CD8-positive, alpha-beta T cell (primary cell): ENCODE measurements at regions of chr1 and their contacts with region 1.

Region 1: DNA sequence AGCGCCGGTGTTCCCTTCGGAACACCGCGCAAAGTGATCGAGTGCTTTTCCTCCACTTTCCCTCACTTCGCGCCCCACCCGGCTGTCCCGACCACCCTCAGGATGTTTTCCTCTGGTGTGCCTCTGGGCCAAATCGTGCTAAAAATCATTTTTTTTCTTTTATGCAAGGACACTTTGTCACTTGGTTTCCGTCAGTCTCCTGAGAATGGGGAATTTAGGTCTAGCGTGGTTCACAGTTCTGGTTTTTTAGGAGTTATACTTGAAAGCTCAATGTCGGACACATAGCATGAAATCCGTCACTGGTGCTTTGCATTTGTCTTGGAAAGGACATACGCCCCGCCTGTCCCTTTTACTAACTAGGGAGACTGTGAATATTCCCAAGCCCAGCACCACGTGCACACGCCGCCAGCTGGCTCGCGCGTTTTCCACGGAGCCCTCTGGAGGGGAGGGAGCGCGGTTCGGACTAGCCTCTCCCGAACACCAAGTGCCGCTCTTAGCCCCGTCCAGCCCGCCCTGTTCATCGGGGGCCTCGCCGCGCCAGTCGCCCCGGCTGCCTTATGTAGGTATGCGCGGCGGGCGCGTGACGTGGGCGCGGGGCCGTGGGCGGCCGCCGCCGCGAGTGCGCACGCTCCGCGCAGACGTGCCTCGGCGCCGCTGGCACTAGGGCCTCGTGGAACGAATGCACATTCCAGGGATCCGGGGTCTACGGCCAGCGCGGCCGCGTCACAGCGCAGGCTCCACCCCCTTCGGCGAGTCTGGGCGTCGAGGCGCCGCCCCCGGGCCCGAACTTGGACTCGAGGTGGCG is 572 bp upstream of the IRF2BP2 start:
- DNase-seq: peak; percentile 78 to 98 (median 89)
- ATAC-seq: peak; percentile 42
- H3K4me3 ChIP-seq: peak overlapping the region; percentile 78 to 86
- H3K4me3 Mint-ChIP-seq: peak overlapping the region; percentile 92
- H3K27ac ChIP-seq: peak overlapping the region; percentile 97 to 99
- H3K27ac Mint-ChIP-seq: peak overlapping the region; percentile 98
- H3K4me1 ChIP-seq: peaks cover 46% of the 10 kb centered on the region
- H3K4me1 Mint-ChIP-seq: peaks cover 49% of the 10 kb centered on the region
- H3K27me3 ChIP-seq: no peaks in the 10 kb centered on the region
- H3K27me3 Mint-ChIP-seq: no peaks in the 10 kb centered on the region
- CTCF ChIP-seq: no peak

Region 2: GRCh38 chr1:234579967-234580366 is 30.6 kb before region 1 on chr1:
- CTCF ChIA-PET with region 1: no interaction called
- POLR2A ChIA-PET with region 1: no interaction called
- intact Hi-C with region 1: no loop called
- DNase-seq: peak in 2 of 9 experiments; percentile 18 to 48
- ATAC-seq: peak; percentile 57
- H3K4me3 ChIP-seq: no peak overlapping the region
- H3K4me3 Mint-ChIP-seq: no peak overlapping the region
- H3K27ac ChIP-seq: no peak overlapping the region
- H3K27ac Mint-ChIP-seq: no peak overlapping the region
- H3K4me1 ChIP-seq: no peaks in the 10 kb centered on the region
- H3K4me1 Mint-ChIP-seq: no peaks in the 10 kb centered on the region
- H3K27me3 ChIP-seq: no peaks in the 10 kb centered on the region
- H3K27me3 Mint-ChIP-seq: peaks cover 2% of the 10 kb centered on the region
- CTCF ChIP-seq: peak; percentile 18

Region 3: DNA sequence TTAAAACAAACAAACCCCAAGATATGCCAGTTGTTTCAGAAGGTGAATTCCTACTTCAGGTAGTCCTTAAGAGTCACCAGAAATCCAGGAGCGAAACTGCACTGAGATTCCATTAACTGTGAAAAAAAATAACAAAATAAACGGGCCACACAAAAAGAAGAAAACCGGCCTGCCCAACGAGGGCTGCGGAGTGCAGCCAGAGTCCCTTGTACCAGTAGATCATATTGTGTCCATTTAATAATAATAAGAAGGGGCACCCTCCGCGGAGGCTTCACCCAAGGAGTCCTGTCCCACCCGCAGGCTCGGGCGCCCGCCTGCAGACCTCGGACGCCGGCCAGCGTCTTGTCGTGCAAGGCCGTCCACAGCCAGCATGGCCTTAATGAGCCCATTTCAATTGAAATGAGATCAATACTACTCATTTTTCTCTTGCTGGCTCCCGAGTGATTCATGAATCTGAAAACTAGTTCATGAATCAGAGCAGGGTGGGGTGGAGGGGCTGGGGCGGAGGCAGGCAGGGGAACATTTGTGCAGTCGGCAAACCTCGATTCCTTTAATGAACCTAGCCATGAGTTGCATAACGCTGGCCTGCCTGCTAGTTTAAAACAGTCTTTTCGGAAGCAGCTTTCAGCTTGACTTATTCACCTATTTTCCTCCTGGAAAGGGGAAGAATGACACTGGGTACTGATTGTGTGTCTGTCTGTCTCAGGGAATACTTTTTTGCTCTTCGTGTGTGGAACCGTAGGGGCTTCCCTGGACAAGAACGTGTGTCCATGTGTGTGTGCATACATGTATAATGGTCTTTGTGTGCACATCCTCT is 112.6 kb after region 1 on chr1:
- CTCF ChIA-PET with region 1: interaction called, 21 read pairs
- POLR2A ChIA-PET with region 1: interaction called, 115 read pairs
- intact Hi-C with region 1: loop called (anchors 1 kb)
- DNase-seq: peak in 8 of 9 experiments; percentile 37 to 76 (median 58)
- ATAC-seq: peak; percentile 26
- H3K4me3 ChIP-seq: peak overlapping the region; percentile 28 to 34
- H3K4me3 Mint-ChIP-seq: peak overlapping the region; percentile 71
- H3K27ac ChIP-seq: peak overlapping the region; percentile 83 to 96
- H3K27ac Mint-ChIP-seq: peak overlapping the region; percentile 92
- H3K4me1 ChIP-seq: peaks cover 38% of the 10 kb centered on the region
- H3K4me1 Mint-ChIP-seq: peaks cover 61% of the 10 kb centered on the region
- H3K27me3 ChIP-seq: no peaks in the 10 kb centered on the region
- H3K27me3 Mint-ChIP-seq: no peaks in the 10 kb centered on the region
- CTCF ChIP-seq: no peak

Region 4: DNA sequence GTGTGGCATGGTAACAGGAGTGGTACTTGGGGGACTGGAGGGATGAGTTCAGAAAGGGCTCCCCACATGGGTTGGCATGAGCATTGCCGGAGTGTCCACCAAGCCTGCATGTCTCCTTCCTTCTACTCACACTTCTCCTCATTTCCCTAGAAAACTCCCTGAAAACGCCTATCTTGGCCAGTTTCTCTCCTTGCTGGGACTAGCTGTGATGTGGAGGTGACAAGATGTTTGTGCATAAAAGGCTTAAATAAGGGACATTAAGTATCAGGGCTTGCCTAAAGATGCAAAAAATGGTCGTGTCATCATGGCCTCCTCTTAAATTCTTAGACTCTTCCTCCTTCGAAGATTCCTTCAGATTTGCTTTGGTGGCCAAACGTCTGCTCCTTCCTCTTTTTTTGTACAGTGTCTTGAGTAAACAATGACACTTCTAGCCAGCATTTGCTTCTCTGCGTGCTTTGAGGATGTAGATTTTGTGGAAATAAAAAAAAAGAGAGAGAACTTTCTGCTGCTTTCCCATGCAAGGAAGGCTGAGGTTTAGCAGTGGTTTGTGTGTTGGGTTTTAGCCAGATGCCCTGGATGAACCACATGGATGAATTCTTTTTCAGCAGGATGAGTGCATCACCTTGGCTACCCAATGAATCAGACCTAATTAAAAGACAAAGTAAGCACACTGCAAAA is 238.6 kb after region 1 on chr1:
- CTCF ChIA-PET with region 1: interaction called, 4 read pairs
- POLR2A ChIA-PET with region 1: interaction called, 3 read pairs
- intact Hi-C with region 1: loop called (anchors 5 to 10 kb)
- DNase-seq: no peak
- ATAC-seq: no peak
- H3K4me3 ChIP-seq: no peak overlapping the region
- H3K4me3 Mint-ChIP-seq: no peak overlapping the region
- H3K27ac ChIP-seq: no peak overlapping the region
- H3K27ac Mint-ChIP-seq: no peak overlapping the region
- H3K4me1 ChIP-seq: peaks cover 22% of the 10 kb centered on the region
- H3K4me1 Mint-ChIP-seq: peaks cover 38% of the 10 kb centered on the region
- H3K27me3 ChIP-seq: no peaks in the 10 kb centered on the region
- H3K27me3 Mint-ChIP-seq: no peaks in the 10 kb centered on the region
- CTCF ChIP-seq: no peak

Region 5: GRCh38 chr1:234978397-234979295 is 368.1 kb after region 1 on chr1:
- CTCF ChIA-PET with region 1: no interaction called
- POLR2A ChIA-PET with region 1: interaction called, 17 read pairs
- intact Hi-C with region 1: no loop called
- DNase-seq: peak in 6 of 9 experiments; percentile 29 to 76 (median 62)
- ATAC-seq: peak; percentile 77
- H3K4me3 ChIP-seq: peak overlapping the region in 1 of 2 experiments; percentile 11
- H3K4me3 Mint-ChIP-seq: peak overlapping the region; percentile 66
- H3K27ac ChIP-seq: peak overlapping the region in 1 of 2 experiments; percentile 3
- H3K27ac Mint-ChIP-seq: peak overlapping the region; percentile 93
- H3K4me1 ChIP-seq: peaks cover 35% of the 10 kb centered on the region
- H3K4me1 Mint-ChIP-seq: peaks cover 47% of the 10 kb centered on the region
- H3K27me3 ChIP-seq: no peaks in the 10 kb centered on the region
- H3K27me3 Mint-ChIP-seq: no peaks in the 10 kb centered on the region
- CTCF ChIP-seq: no peak